ENCODE measurements at regions of chr7 and their contacts with region 1.

Region 1: GRCh38 chr7:85954961-85955360 is 688.7 kb upstream of the GRM3 start:
- DNase-seq: no peak
- H3K4me3 ChIP-seq: no peak overlapping the region
- H3K27ac ChIP-seq: no peak overlapping the region
- H3K4me1 ChIP-seq: no peaks in the 10 kb centered on the region
- CTCF ChIP-seq: no peak

Region 2: GRCh38 chr7:85851571-85852193 is 103.3 kb before region 1 on chr7:
- CTCF ChIA-PET with region 1: no interaction called
- POLR2A ChIA-PET with region 1: no interaction called
- intact Hi-C with region 1: no loop called
- DNase-seq: peak; percentile 21
- H3K4me3 ChIP-seq: no peak overlapping the region
- H3K27ac ChIP-seq: no peak overlapping the region
- H3K4me1 ChIP-seq: no peaks in the 10 kb centered on the region
- CTCF ChIP-seq: peak; percentile 73

Region 3: GRCh38 chr7:85971589-85971988 is 16.6 kb after region 1 on chr7:
- CTCF ChIA-PET with region 1: no interaction called
- POLR2A ChIA-PET with region 1: no interaction called
- intact Hi-C with region 1: no loop called
- DNase-seq: no peak
- H3K4me3 ChIP-seq: no peak overlapping the region
- H3K27ac ChIP-seq: no peak overlapping the region
- H3K4me1 ChIP-seq: no peaks in the 10 kb centered on the region
- CTCF ChIP-seq: no peak

Region 4: GRCh38 chr7:86025807-86026206 is 70.8 kb after region 1 on chr7:
- CTCF ChIA-PET with region 1: no interaction called
- POLR2A ChIA-PET with region 1: no interaction called
- intact Hi-C with region 1: loop called (anchors 5 kb)
- DNase-seq: no peak
- H3K4me3 ChIP-seq: no peak overlapping the region
- H3K27ac ChIP-seq: no peak overlapping the region
- H3K4me1 ChIP-seq: no peaks in the 10 kb centered on the region
- CTCF ChIP-seq: no peak